ENCODE measurements at regions of chr3 and their contacts with region 1.

Region 1: DNA sequence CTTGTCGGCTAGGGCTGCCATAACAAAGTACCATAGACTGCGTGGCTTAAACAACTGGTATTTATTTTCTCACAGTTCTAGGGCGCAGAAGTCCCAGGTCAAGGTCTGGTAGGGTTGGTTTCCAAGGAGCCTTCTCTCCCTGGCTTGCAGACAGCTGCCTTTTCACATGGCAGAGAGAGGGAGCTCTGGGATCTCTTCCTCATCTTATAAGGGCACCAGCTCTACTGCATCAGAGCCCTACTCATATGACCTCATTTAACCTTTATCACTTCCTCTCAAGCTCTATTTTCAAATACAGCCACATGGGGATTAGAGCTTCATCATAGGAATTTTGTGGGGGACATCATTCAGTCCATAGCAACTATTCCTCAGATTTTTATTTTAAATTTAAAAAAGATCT is 17.6 kb upstream of the PAQR9 start:
- DNase-seq: no peak
- CTCF ChIP-seq: no peak

Region 2: GRCh38 chr3:142943870-142944269 is 37.2 kb before region 1 on chr3:
- CTCF ChIA-PET with region 1: no interaction called
- POLR2A ChIA-PET with region 1: no interaction called
- DNase-seq: no peak
- CTCF ChIP-seq: no peak

Region 3: DNA sequence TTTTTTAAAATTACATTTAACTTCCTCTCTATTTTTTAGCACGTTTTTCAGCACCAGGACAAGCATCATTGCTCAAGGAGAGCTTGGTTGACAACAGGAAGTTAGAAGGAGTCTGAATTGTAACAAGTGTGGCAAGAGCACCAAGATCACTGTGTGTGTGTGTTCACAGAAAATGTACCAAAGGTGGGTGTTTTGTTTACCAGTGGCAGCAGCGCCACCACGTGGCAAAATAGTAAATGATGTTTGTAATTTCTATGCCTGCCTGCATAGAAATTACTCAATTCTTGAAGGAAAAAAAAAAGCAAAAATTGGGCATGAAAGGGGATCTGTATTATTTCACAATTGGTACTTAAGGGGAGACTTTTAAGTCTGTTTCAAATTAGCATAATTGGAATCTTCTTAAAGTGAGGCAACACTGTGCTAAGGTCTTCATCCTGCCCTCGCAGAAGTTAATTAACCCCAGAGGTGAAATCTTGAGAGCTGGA is 12.9 kb after region 1 on chr3:
- CTCF ChIA-PET with region 1: interaction called, 13 read pairs
- POLR2A ChIA-PET with region 1: no interaction called
- DNase-seq: peak; percentile 69
- CTCF ChIP-seq: peak; percentile 77